Activated T-helper 1 cell treated with anti-CD3 and anti-CD28 coated beads, Interleukin-12 subunit alpha, Interleukin-12 subunit beta, Interleukin-2, Interleukin-4 antibody, amounts not matched to agents 30 ng/mL and 10 ng/mL and 1 ng/mL, durations not matched to agents 14 hours and 24 hours and 36 hours (primary cell): ENCODE measurements at regions of chr3 and their contacts with region 1.

Region 1: GRCh38 chr3:153621953-153622352 is 459.9 kb downstream of the RAP2B start:
- DNase-seq: no peak
- H3K4me3 Mint-ChIP-seq: peak overlapping the region; percentile 41
- H3K27ac Mint-ChIP-seq: peak overlapping the region; percentile 87
- H3K4me1 Mint-ChIP-seq: peaks cover 61% of the 10 kb centered on the region
- H3K27me3 Mint-ChIP-seq: no peaks in the 10 kb centered on the region

Region 2: GRCh38 chr3:152193673-152194267 is 1428.2 kb before region 1 on chr3:
- intact Hi-C with region 1: loop called (anchors 10 kb)
- DNase-seq: no peak
- H3K4me3 Mint-ChIP-seq: peak overlapping the region; percentile 71
- H3K27ac Mint-ChIP-seq: peak overlapping the region; percentile 87
- H3K4me1 Mint-ChIP-seq: peaks cover 87% of the 10 kb centered on the region
- H3K27me3 Mint-ChIP-seq: no peaks in the 10 kb centered on the region

Region 3: GRCh38 chr3:153043729-153044328 is 578.1 kb before region 1 on chr3:
- intact Hi-C with region 1: loop called (anchors 2 kb)
- DNase-seq: no peak
- H3K4me3 Mint-ChIP-seq: no peak overlapping the region
- H3K27ac Mint-ChIP-seq: no peak overlapping the region
- H3K4me1 Mint-ChIP-seq: peaks cover 12% of the 10 kb centered on the region
- H3K27me3 Mint-ChIP-seq: no peaks in the 10 kb centered on the region

Region 4: GRCh38 chr3:153284282-153284938 is 337.5 kb before region 1 on chr3:
- intact Hi-C with region 1: loop called (anchors 10 kb)
- DNase-seq: no peak
- H3K4me3 Mint-ChIP-seq: no peak overlapping the region
- H3K27ac Mint-ChIP-seq: peak overlapping the region; percentile 36
- H3K4me1 Mint-ChIP-seq: peaks cover 40% of the 10 kb centered on the region
- H3K27me3 Mint-ChIP-seq: no peaks in the 10 kb centered on the region

Region 5: GRCh38 chr3:153552887-153553598 is 68.9 kb before region 1 on chr3:
- intact Hi-C with region 1: loop called (anchors 1 kb)
- DNase-seq: no peak
- H3K4me3 Mint-ChIP-seq: no peak overlapping the region
- H3K27ac Mint-ChIP-seq: no peak overlapping the region
- H3K4me1 Mint-ChIP-seq: peaks cover 11% of the 10 kb centered on the region
- H3K27me3 Mint-ChIP-seq: no peaks in the 10 kb centered on the region

Region 6: GRCh38 chr3:153640689-153641301 is 18.8 kb after region 1 on chr3:
- intact Hi-C with region 1: loop called (anchors 1 kb)
- DNase-seq: no peak
- H3K4me3 Mint-ChIP-seq: no peak overlapping the region
- H3K27ac Mint-ChIP-seq: no peak overlapping the region
- H3K4me1 Mint-ChIP-seq: peaks cover 52% of the 10 kb centered on the region
- H3K27me3 Mint-ChIP-seq: no peaks in the 10 kb centered on the region

Region 7: GRCh38 chr3:154018100-154018696 is 396.2 kb after region 1 on chr3:
- intact Hi-C with region 1: no loop called
- DNase-seq: no peak
- H3K4me3 Mint-ChIP-seq: no peak overlapping the region
- H3K27ac Mint-ChIP-seq: no peak overlapping the region
- H3K4me1 Mint-ChIP-seq: no peaks in the 10 kb centered on the region
- H3K27me3 Mint-ChIP-seq: no peaks in the 10 kb centered on the region

Region 8: DNA sequence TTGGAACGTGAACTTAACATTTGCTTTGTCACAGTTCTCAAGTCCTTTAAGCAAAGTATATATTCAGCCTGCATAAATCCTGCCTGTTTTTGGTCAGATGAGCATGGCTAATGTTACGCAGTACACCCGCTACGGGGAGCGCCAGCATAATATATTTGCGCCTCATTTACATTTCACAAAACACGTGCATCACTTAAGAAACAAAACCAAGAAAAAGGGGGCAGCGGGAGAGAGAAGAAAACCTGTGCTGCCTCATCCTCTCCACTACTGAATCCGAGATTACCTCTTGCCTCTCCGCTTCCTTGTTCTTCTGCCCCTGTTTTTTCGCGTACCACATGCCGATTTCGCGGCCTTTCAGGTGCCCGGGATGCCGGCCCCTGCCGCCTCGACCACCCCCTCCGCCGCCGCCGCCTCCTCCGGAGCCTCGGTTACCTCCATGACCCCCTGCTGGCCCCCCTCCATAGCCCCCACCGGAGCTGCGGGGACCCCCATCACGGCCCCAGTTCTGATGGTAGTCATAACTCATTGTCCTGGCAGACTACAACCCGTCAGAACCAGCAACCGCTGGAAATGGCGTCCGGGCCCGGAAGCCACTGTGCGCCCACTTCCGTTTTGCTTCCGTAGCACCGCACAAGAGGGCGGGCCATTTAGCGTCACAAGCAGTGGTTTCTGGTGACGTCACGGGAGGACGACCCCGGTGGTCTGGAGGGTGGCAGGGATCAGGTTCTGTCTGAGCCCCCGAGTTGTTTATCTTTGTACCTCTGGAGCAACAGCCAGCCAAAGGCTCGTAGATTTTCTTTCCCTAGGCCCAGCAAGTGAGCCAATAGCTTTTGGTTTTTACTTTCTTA is 702.2 kb after region 1 on chr3 and contains the start of gene DHX36:
- intact Hi-C with region 1: loop called (anchors 10 kb)
- DNase-seq: peak; percentile 84
- H3K4me3 Mint-ChIP-seq: peak within 1 kb of the TSS; percentile 95
- H3K27ac Mint-ChIP-seq: peak within 1 kb of the TSS; percentile 96
- H3K4me1 Mint-ChIP-seq: peaks cover 20% of the 10 kb centered on the region
- H3K27me3 Mint-ChIP-seq: no peaks in the 10 kb centered on the region
- total RNA-seq, gene DHX36: 95.2 and 101 TPM in 2 replicates